CD4-positive, alpha-beta memory T cell (primary cell): ENCODE measurements at regions of chr10 and their contacts with region 1.

Region 1: DNA sequence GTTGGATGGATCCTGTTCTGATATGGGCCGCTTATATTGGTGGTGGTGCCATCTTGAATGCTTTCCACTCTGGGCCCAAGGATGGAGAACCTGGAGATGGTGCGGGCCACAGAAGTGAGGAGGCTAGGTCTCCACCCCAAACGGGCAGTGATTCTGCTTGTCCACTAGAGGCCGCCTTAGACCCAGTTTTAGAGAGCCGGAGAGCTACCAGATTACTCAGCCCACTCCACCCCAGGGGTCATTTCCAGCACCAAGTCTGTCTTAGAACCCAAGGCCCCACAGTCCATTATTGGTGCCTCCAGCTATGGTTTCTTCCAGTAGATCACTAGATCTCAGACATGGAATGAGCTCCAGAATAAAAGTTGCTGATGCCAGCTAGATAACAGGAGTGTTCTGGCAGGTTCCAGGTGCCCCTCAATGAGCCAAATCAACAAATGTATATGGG is 11.8 kb upstream of the CAMK2G start:
- DNase-seq: peak; percentile 67 to 76 (median 68)
- H3K4me3 ChIP-seq: no peak overlapping the region
- H3K4me3 Mint-ChIP-seq: peak overlapping the region in 1 of 8 donors; percentile 22
- H3K27ac ChIP-seq: no peak overlapping the region
- H3K27ac Mint-ChIP-seq: peak overlapping the region in 3 of 7 donors; percentile 64 to 70 (median 65)
- H3K4me1 ChIP-seq: peaks cover 9% of the 10 kb centered on the region
- H3K4me1 Mint-ChIP-seq: peaks cover 5 to 9% (median 6%) of the 10 kb centered on the region in 4 donors
- H3K27me3 ChIP-seq: no peaks in the 10 kb centered on the region
- H3K27me3 Mint-ChIP-seq: no peaks in the 10 kb centered on the region

Region 2: DNA sequence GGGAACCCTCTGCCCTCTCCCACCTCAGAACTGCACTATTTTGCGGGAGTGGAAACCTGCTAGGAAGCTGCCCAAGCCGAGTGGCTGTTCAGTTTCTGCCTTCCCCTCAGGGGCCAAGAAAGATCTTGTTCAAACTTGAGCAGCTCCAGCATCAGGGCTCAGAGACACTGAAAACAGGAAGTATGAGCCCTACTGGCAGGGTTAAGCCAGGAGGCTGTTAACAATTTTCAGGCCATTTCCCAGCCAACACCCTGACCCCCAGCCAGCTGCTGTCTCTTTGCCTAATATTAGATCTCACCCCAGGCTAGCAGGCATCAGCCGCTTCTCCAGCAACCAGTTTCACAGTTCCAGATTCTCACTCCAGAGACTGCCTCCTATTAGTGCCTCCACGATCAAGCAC is 34.0 kb after region 1 on chr10:
- CTCF ChIA-PET with region 1: interaction called, 16 read pairs
- POLR2A ChIA-PET with region 1: interaction called, 3 read pairs
- intact Hi-C with region 1: loop called (anchors 5 kb)
- DNase-seq: no peak
- H3K4me3 ChIP-seq: no peak overlapping the region
- H3K4me3 Mint-ChIP-seq: peak overlapping the region in 3 of 8 donors; percentile 40 to 62 (median 57)
- H3K27ac ChIP-seq: no peak overlapping the region
- H3K27ac Mint-ChIP-seq: peak overlapping the region in 1 of 7 donors; percentile 70
- H3K4me1 ChIP-seq: peaks cover 32% of the 10 kb centered on the region
- H3K4me1 Mint-ChIP-seq: peaks cover 23 to 41% (median 26%) of the 10 kb centered on the region in 4 donors
- H3K27me3 ChIP-seq: no peaks in the 10 kb centered on the region
- H3K27me3 Mint-ChIP-seq: peaks cover 4 to 8% of the 10 kb centered on the region in 2 donors

Region 3: DNA sequence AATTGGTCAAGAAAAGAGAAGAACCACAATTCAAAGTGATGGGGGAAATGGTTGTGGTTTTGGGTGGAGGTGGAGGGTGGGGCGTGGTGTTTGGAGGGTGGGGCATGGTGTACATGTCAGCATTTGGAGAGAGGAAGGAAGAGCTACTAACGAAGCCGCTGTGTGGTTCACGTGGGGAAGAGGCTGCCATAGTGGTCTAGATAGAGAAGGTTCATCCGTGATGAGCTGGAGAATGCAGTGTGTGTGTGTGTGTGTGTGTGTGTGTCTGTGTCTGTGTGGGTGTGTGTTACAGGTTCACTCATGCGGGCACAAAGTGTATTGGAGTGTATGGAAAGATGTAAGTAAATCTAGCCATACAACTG is 105.8 kb after region 1 on chr10:
- CTCF ChIA-PET with region 1: interaction called, 3 read pairs
- POLR2A ChIA-PET with region 1: no interaction called
- intact Hi-C with region 1: loop called (anchors 2 kb)
- DNase-seq: peak; percentile 82 to 90 (median 88)
- H3K4me3 ChIP-seq: no peak overlapping the region
- H3K4me3 Mint-ChIP-seq: peak overlapping the region; percentile 36 to 89 (median 60)
- H3K27ac ChIP-seq: peak overlapping the region; percentile 7
- H3K27ac Mint-ChIP-seq: peak overlapping the region; percentile 70 to 97 (median 93)
- H3K4me1 ChIP-seq: peaks cover 34% of the 10 kb centered on the region
- H3K4me1 Mint-ChIP-seq: peaks cover 23 to 62% (median 43%) of the 10 kb centered on the region in 4 donors
- H3K27me3 ChIP-seq: no peaks in the 10 kb centered on the region
- H3K27me3 Mint-ChIP-seq: no peaks in the 10 kb centered on the region

Region 4: DNA sequence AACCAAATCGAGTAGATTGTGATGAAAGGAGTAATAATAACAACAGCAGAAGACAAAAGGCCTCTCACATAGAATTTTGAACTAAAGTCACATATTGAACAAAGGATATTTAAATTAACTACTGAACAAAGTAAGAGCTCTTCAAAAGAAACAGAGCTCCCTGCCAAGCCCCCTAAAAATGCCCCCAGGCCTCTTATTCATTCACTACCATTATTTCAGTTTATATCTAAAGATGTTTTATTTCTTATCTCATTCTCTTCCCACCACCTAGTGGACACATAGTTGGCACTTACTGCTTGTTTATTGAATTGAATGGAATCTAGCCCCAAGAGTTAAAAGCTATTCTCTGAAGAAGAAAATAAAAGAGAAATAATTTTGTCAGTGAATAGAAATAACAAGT is 149.2 kb after region 1 on chr10:
- CTCF ChIA-PET with region 1: interaction called, 40 read pairs
- POLR2A ChIA-PET with region 1: no interaction called
- intact Hi-C with region 1: loop called (anchors 1 kb)
- DNase-seq: peak in 1 of 5 donors; percentile 14
- H3K4me3 ChIP-seq: no peak overlapping the region
- H3K4me3 Mint-ChIP-seq: no peak overlapping the region
- H3K27ac ChIP-seq: no peak overlapping the region
- H3K27ac Mint-ChIP-seq: peak overlapping the region in 6 of 7 donors; percentile 31 to 90 (median 80)
- H3K4me1 ChIP-seq: peaks cover 41% of the 10 kb centered on the region
- H3K4me1 Mint-ChIP-seq: peaks cover 43 to 64% (median 48%) of the 10 kb centered on the region in 4 donors
- H3K27me3 ChIP-seq: no peaks in the 10 kb centered on the region
- H3K27me3 Mint-ChIP-seq: no peaks in the 10 kb centered on the region

Region 5: GRCh38 chr10:74088722-74089121 is 202.6 kb after region 1 on chr10:
- CTCF ChIA-PET with region 1: interaction called, 150 read pairs
- POLR2A ChIA-PET with region 1: no interaction called
- intact Hi-C with region 1: no loop called
- DNase-seq: no peak
- H3K4me3 ChIP-seq: no peak overlapping the region
- H3K4me3 Mint-ChIP-seq: no peak overlapping the region
- H3K27ac ChIP-seq: no peak overlapping the region
- H3K27ac Mint-ChIP-seq: no peak overlapping the region
- H3K4me1 ChIP-seq: no peaks in the 10 kb centered on the region
- H3K4me1 Mint-ChIP-seq: peaks cover 0 to 4% (median 2%) of the 10 kb centered on the region in 4 donors
- H3K27me3 ChIP-seq: no peaks in the 10 kb centered on the region
- H3K27me3 Mint-ChIP-seq: no peaks in the 10 kb centered on the region